ENCODE measurements at regions of chr1 and their contacts with region 1.

Region 1: DNA sequence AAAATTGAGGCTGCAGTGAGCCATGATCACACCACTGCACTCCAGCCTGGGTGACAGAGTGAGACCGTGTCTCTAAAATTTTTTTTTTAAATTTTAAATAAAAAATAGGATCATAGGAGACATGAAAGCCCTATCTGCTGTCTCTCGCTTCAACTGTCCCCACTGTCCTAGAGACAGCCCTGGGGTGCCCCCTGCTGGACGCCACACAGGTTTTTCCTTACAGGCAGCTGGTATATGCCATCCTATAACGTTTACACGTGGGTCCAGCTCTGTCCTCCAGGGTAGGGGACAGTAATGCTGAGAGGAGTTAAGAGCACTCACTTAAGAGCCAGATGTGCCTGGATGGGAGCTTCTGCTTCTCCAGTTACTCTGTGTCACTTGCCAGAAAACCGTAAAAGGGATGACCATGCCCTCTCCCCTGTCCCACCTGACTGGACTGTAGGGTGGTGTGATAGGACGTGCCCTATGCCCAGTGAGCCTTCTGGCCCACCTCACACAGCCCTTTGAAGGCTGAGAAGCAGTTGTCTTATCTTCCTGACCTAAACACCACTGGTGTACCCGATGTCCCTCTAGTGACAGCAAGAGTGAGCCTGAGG is 8.5 kb downstream of the FBXO2 start:
- DNase-seq: peak; percentile 46 to 72
- H3K4me3 ChIP-seq: no peak overlapping the region
- H3K27ac ChIP-seq: no peak overlapping the region
- H3K4me1 ChIP-seq: no peaks in the 10 kb centered on the region
- H3K27me3 ChIP-seq: 0 out of 2 replicates have a peak, but pooled peaks cover 1% of the 10 kb centered on the region
- CTCF ChIP-seq: peak; percentile 74

Region 2: DNA sequence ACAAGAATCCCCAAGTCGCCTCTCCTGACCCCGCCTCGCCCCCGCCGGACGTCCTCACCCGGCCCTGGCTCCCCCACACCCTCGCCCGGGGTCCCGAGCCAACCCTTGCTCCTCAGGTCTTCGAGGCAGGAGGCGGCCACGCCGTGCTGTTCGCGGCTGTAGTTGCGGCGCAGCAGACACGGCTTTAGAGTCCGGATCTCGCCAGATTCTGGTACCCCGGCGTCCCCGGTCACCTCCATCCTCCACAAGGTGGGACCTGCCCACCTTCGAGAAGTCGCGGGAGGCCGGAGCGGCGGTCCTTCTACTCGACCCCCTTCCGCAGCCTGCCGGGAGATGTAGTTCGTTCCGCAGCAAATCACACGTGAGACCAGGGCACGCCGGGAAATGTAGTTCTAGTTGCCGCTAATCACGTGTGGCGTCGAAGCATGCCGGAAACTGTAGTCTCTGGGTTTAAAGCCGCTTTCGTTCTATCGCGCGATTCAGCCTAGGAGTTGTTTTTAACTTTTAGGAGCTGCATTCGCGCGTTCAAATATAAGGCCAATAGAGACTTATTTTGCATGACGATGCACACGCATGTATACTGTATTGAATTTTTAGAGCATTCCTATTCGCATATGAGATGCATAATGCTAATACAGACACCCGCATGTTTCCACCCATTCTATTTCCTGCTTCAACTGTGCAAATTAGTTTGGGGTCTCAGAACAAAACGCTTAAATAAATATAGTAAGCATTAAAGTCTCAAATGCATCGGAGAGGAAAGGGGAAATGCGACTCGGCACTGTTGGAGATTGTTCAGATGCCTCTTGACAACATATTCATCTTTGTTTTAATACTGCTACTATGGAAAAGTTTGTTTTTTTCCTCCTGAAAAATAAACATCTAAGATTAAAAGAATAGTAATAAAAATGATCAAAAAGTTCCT is 1173.3 kb before region 1 on chr1 and contains the start of gene DFFA:
- CTCF ChIA-PET with region 1: interaction called, 12 read pairs
- POLR2A ChIA-PET with region 1: no interaction called
- intact Hi-C with region 1: no loop called
- DNase-seq: peak; percentile 87 to 88
- H3K4me3 ChIP-seq: peak within 1 kb of the TSS; percentile 64
- H3K27ac ChIP-seq: peak within 1 kb of the TSS; percentile 60
- H3K4me1 ChIP-seq: peaks cover 17% of the 10 kb centered on the region
- H3K27me3 ChIP-seq: no peaks in the 10 kb centered on the region
- CTCF ChIP-seq: no peak
- total RNA-seq, gene DFFA: 35.2 and 36.8 TPM in 2 replicates

Region 3: GRCh38 chr1:11037740-11038182 is 608.0 kb before region 1 on chr1:
- CTCF ChIA-PET with region 1: interaction called, 4 read pairs
- POLR2A ChIA-PET with region 1: no interaction called
- intact Hi-C with region 1: loop called (anchors 1 kb)
- DNase-seq: peak; percentile 45 to 75
- H3K4me3 ChIP-seq: no peak overlapping the region
- H3K27ac ChIP-seq: no peak overlapping the region
- H3K4me1 ChIP-seq: no peaks in the 10 kb centered on the region
- H3K27me3 ChIP-seq: no peaks in the 10 kb centered on the region
- CTCF ChIP-seq: peak; percentile 89

Region 4: DNA sequence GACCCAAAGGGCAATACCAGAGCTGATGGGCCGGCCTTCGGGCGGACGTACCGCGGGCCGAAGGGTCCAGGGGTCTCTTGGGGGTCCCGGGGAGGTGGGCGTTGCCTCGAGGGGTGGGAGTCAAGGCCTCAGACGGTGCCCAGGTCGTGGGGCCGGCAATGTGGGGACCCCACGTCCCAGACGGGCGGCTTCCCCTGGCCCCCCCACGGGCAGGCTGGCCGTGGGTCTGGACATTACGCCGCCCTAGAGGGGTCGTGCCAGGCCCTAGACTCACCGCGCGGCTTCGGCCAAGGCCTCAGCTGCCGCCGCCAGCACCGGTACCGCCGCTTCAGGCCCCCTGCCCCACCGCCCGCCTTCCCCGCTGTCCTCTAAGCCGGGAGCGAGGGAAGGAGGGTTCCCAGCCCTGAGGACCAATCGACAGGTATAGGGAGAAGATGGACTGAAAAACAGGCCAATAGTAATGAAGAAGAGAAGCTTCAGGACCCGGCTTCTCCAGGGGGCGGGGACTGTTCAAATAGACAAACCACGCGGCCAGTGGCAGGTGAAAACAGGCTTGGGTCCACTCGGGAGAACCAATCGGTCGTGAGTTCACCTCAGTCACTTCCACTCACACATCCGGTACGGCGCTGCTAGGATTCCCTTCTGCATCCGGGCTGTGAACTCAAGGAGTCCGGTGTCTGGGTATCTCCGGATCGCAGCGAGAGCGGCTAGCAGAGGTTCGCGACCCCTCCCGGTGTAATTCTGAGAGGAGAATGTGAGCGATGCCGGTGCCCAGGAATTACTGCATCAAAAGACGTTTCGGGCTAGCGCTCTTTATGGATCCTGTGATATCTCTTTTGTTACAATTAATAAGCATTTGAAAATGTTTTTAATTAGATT is 383.4 kb before region 1 on chr1 and contains the start of gene MTOR:
- CTCF ChIA-PET with region 1: interaction called, 4 read pairs
- POLR2A ChIA-PET with region 1: no interaction called
- intact Hi-C with region 1: loop called (anchors 5 kb)
- DNase-seq: peak; percentile 97 to 98
- H3K4me3 ChIP-seq: peak within 1 kb of the TSS; percentile 71
- H3K27ac ChIP-seq: no peak within 1 kb of the TSS
- H3K4me1 ChIP-seq: peaks cover 5% of the 10 kb centered on the region; the same call in 1 of the 2 replicates
- H3K27me3 ChIP-seq: no peaks in the 10 kb centered on the region
- CTCF ChIP-seq: no peak
- total RNA-seq, gene MTOR: 34.6 and 37.4 TPM in 2 replicates

Region 5: DNA sequence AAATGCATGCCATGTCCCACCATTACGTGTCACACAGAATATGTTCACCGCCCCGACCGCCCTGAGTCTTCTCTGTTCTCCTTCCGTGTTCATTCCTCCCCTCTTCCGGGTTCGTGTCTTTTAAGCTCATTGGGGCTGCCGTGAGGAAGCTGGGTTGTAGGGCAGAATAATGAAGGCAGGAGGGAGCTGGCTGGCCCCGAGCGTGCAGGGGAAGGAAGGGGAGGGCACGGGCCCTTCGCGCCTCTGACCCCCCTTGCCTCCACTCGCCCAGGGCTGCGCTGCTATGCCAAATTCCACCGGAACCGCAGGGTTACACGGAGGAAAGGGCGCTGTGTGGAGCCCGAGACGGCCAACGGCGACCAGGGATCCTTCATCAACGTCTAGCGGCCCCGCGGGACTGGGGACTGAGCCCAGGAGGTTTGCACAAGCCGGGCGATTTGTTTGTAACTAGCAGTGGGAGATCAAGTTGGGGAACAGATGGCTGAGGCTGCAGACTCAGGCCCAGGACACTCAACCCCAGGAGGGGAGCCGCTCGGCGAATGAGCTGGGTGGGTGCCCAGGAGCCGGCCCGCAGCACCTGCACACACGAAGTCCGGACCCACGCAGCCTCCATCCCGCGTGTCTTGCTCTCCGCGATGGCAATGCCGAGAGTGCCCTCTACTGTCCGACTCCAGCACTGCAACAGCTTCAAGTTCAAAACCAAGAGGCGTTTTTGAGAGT is 73.7 kb after region 1 on chr1:
- CTCF ChIA-PET with region 1: no interaction called
- POLR2A ChIA-PET with region 1: no interaction called
- intact Hi-C with region 1: loop called (anchors 2 kb)
- DNase-seq: peak in 1 of 2 experiments; percentile 62
- H3K4me3 ChIP-seq: no peak overlapping the region
- H3K27ac ChIP-seq: no peak overlapping the region
- H3K4me1 ChIP-seq: no peaks in the 10 kb centered on the region
- H3K27me3 ChIP-seq: peaks cover 12% of the 10 kb centered on the region
- CTCF ChIP-seq: peak; percentile 92

Measured in PC-9 (cell line).